ENCODE measurements at regions of chr2 and their contacts with region 1.

Region 1: GRCh38 chr2:214809751-214810564 is 475 bp upstream of the BARD1 start:
- DNase-seq: peak; percentile 96 to 100
- H3K4me3 ChIP-seq: peak overlapping the region; percentile 70 to 74
- H3K27ac ChIP-seq: peak overlapping the region; percentile 78 to 79
- H3K4me1 ChIP-seq: peaks cover 0 to 7% of the 10 kb centered on the region in 2 donors
- H3K27me3 ChIP-seq: no peaks in the 10 kb centered on the region
- CTCF ChIP-seq: no peak

Region 2: DNA sequence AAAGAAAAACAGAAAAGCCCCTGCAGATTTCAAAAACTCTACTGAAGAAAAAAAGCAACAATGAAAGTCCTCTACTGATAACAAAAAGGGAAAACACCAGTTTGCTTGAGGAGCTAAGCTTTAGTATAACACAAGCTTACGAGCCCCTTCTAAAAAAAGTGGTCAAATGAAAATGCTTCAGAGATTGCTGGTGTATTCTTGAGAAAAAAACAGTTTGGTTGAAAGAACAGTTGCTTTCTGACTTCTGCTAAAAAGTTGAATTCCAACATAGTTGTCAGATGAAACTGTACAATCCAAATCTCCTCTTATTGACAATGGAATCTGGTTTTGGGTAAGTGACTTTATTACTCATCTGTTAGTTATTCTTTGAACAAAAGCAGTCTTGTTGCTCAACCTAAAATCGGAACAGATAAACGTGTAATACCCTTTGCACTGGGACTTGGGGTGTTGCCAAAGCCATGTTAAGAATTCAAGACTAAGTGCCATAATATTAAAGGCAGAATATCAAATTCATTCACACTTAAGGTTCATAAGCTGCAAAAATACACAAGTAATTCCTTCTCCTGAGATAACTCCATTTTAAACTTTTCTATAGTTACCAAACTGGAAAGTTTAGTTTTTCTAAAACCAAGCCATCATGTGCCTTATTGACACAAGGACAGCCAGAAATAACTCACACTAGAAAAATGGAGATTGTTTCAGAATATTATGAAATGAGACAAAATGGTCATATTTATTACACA is 1571.0 kb before region 1 on chr2:
- intact Hi-C with region 1: loop called (anchors 10 kb)
- DNase-seq: peak in 1 of 2 donors; percentile 70
- H3K4me3 ChIP-seq: peak overlapping the region; percentile 26 to 43
- H3K27ac ChIP-seq: peak overlapping the region; percentile 53 to 54
- H3K4me1 ChIP-seq: peaks cover 0 to 8% of the 10 kb centered on the region in 2 donors
- H3K27me3 ChIP-seq: no peaks in the 10 kb centered on the region
- CTCF ChIP-seq: no peak

Region 3: GRCh38 chr2:213284105-213285090 is 1525.6 kb before region 1 on chr2 and contains the start of gene SPAG16:
- intact Hi-C with region 1: loop called (anchors 2 kb)
- DNase-seq: peak; percentile 83 to 97
- H3K4me3 ChIP-seq: peak within 1 kb of the TSS; percentile 84 to 85
- H3K27ac ChIP-seq: peak within 1 kb of the TSS; percentile 60 to 69
- H3K4me1 ChIP-seq: peaks cover 0 to 5% of the 10 kb centered on the region in 2 donors
- H3K27me3 ChIP-seq: no peaks in the 10 kb centered on the region
- CTCF ChIP-seq: no peak
- total RNA-seq, gene SPAG16: 7.6 TPM

Region 4: GRCh38 chr2:214401580-214401979 is 408.4 kb before region 1 on chr2:
- intact Hi-C with region 1: no loop called
- DNase-seq: no peak
- H3K4me3 ChIP-seq: no peak overlapping the region
- H3K27ac ChIP-seq: no peak overlapping the region
- H3K4me1 ChIP-seq: no peaks in the 10 kb centered on the region
- H3K27me3 ChIP-seq: no peaks in the 10 kb centered on the region
- CTCF ChIP-seq: no peak

Region 5: DNA sequence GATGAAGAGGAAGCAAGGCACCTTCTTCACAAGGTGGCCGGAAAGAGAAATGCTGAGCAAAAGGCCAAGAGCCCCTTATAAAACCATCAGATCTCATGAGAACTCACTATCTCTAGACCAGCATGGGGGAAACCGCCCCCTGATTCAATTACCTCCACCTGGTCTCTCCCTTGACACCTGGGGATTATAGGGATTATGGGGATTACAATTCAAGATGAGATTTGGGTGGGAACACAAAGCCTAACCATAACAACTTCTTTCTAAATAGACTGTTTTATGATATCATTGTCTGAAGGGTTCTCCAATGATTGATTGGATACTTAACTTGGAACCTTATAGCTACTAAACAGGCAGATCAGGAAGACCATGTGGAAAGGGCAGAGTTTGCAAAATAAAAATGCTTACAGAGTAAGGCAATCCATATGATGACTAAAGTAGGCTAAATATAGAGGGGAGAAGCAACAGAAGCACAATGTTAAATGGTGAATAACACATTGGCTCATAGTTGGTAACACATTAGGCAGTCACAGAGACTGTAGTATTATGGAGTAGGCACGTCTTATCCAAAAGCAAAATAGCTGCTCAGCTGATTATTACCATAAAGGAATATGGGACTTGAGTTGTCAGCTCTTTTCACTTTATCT is 179.4 kb before region 1 on chr2:
- intact Hi-C with region 1: no loop called
- DNase-seq: no peak
- H3K4me3 ChIP-seq: no peak overlapping the region
- H3K27ac ChIP-seq: no peak overlapping the region
- H3K4me1 ChIP-seq: no peaks in the 10 kb centered on the region
- H3K27me3 ChIP-seq: no peaks in the 10 kb centered on the region
- CTCF ChIP-seq: no peak

Region 6: GRCh38 chr2:214934006-214934405 is 124.0 kb after region 1 on chr2:
- intact Hi-C with region 1: no loop called
- DNase-seq: no peak
- H3K4me3 ChIP-seq: no peak overlapping the region
- H3K27ac ChIP-seq: no peak overlapping the region
- H3K4me1 ChIP-seq: no peaks in the 10 kb centered on the region
- H3K27me3 ChIP-seq: no peaks in the 10 kb centered on the region
- CTCF ChIP-seq: no peak

Region 7: DNA sequence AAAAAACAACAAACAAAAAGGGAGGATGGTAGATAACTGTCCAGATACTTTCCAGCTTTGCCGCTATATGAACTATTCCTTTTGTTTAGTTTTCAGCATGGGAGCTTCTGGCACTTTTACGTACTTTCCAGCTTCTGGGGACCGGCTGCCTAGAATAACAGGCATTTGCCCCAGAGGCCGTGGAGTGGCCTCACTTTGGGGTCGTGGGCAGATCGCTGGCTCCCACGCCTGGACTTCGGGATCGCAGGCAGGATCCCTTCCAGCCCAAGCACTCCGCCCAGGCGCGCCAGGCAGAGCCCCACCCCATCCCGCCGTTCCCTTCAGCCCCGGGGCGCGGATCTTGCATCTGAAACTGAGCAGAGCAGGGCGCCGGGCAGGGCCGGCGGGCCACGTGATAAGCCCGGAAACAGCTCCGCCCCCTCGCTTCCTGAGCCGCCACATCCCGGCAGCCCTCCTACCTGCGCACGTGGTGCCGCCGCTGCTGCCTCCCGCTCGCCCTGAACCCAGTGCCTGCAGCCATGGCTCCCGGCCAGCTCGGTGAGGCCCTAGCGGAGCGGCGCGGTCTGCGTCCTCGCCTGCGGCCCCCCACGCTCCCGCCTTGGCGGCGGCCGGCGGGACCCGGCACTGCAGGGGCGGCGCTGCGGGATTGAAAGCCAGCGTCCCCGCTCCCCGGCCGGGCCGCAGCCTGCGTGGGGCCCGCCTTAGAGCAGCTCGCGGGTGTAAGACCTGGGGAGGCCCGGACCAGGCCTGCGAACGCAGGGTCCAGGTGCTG is 501.9 kb after region 1 on chr2 and contains the start of gene ATIC:
- intact Hi-C with region 1: loop called (anchors 5 kb)
- DNase-seq: peak; percentile 73 to 97
- H3K4me3 ChIP-seq: peak within 1 kb of the TSS; percentile 85 to 86
- H3K27ac ChIP-seq: peak within 1 kb of the TSS; percentile 73 to 87
- H3K4me1 ChIP-seq: peaks cover 0 to 6% of the 10 kb centered on the region in 2 donors
- H3K27me3 ChIP-seq: no peaks in the 10 kb centered on the region
- CTCF ChIP-seq: peak in 1 of 3 experiments; percentile 19
- total RNA-seq, gene ATIC: 8.9 TPM

Measured in ascending aorta (tissue), 2 donors.